ENCODE measurements at regions of chr9 and their contacts with region 1.

Region 1: DNA sequence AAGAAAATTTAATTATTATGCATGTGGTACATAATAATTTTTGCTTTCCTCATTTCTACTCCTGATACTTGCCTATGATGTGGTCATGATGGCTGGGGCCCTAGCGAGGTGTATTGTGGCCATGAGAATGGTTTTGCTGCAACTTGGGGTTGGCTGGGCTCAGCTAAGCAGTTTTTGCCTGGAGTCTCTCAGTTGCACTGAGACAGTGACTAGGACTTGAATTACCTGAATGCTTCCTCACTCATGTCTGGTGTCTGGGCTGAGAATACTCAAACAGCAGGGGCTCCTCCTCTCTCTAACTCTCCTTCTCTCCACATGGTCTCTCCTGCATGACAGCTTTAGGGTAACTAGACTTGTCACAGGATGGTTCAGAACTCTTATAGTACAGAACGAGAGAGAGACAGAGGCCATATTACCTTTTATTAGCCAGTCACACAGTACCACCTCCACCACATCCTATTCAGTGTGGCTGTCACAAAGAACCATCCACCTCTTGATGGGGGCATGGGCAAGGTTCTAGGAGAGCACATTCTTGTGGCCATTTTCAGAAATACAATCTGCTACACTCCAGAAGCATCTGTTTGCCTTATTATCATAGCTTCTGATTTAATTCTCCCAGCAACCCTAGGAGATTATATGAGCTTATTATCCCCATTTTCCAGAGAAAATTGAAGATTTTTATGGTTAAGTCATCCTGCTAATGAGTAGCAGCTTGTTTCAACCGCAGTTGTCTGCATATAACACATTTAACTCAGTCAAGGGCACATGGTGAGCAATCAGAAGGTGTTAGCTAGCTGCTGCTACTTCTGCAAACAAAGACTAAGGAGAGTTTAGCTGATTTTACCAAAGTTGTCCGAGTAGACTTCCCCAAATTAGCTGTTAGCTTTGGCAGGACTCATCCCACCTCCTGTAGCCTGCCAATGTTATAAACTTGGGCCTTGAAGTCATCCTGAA is 245.1 kb downstream of the DOCK8 start:
- DNase-seq: no peak
- H3K4me3 ChIP-seq: no peak overlapping the region
- H3K27ac ChIP-seq: no peak overlapping the region
- H3K4me1 ChIP-seq: no peaks in the 10 kb centered on the region
- H3K27me3 ChIP-seq: no peaks in the 10 kb centered on the region
- CTCF ChIP-seq: no peak
- POLR2A ChIP-seq: no peak

Region 2: DNA sequence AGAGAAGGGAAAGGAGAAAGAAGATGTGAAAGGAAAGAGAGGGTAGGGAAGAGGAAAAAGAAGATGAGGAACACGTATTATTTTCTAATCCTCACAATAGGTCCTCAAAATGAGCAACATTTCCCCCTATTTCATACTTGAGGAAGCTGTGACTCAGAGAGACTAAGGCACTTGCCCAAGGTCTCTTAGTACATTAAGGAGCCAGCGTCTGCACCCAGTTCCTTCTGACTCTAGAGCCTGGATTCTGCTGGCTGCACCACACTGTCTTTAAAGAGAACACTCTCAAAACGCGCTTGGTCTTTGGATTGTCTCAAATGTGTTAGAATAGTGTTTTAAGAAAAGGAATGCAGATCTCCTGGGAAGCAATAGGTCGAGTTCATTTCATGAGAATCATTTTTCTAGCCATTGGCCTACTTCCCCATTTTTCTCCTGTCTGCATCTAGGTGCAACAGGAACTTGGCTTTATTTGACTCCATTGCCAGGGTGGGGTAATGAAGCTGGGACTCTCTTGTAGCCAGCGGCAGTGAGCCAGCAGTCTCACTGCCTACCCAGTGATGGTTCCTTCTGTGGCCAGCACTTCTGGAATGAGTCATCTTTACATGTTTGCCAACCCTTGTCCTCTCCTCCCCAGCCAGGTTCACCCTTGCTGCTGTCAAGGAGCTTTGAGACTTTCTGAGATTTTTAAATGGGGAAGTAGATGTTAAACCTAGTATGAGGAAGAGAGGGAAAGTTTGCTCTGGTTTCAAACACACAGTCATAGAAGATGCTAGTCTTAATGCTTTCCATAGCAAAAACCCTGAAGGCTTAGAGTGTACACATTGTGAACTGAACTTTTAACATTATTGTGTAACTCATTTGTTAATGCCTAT is 162.4 kb before region 1 on chr9:
- intact Hi-C with region 1: no loop called
- DNase-seq: peak; percentile 26
- H3K4me3 ChIP-seq: no peak overlapping the region
- H3K27ac ChIP-seq: peak overlapping the region in 1 of 2 donors; percentile 73
- H3K4me1 ChIP-seq: no peaks in the 10 kb centered on the region
- H3K27me3 ChIP-seq: no peaks in the 10 kb centered on the region
- CTCF ChIP-seq: no peak
- POLR2A ChIP-seq: no peak

Region 3: DNA sequence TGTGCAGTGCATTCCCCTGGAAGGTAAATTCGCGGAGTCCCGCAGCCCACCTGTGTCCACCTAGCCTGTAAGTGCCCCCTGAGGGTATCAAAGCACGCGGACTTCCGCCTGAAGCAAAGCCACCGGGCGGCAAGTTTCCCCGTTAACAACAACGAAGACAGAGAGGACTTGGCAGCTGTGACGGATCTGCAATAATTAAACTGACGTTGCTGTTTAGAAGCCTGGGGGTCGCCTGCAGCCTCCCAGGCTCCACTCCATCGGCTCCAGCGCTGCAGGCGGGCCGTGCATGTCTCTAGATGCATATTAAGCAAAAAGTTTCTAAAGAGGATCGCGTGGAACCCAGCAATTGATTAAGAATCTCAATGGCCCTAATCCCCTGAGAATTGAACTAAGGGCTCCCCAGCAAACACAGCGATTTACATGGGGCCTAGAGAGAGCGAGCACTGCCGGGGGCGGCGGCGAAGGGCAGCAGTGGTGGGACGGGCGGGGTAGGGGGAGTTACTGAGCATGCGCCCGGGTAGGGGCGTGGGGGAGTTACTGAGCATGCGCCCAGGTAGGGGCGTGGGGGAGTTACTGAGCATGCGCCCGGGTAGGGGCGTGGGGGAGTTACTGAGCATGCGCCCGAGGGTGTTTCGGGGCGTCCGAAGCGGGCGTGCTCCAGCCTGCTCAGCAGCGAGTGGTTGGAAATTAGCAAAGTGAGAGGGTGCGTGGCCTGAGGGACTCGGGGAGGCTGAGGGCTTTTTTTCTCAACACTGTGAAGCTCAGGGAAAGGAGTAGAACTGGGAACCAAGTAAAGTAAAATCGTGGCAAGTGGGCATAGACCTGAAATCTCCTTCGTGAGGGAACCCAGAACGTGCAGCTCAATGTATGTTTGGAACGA is 10.1 kb after region 1 on chr9:
- intact Hi-C with region 1: no loop called
- DNase-seq: peak; percentile 84
- H3K4me3 ChIP-seq: peak overlapping the region; percentile 30 to 47
- H3K27ac ChIP-seq: peak overlapping the region; percentile 75 to 82
- H3K4me1 ChIP-seq: peaks cover 4% of the 10 kb centered on the region
- H3K27me3 ChIP-seq: no peaks in the 10 kb centered on the region
- CTCF ChIP-seq: no peak
- POLR2A ChIP-seq: peak; percentile 54

Region 4: DNA sequence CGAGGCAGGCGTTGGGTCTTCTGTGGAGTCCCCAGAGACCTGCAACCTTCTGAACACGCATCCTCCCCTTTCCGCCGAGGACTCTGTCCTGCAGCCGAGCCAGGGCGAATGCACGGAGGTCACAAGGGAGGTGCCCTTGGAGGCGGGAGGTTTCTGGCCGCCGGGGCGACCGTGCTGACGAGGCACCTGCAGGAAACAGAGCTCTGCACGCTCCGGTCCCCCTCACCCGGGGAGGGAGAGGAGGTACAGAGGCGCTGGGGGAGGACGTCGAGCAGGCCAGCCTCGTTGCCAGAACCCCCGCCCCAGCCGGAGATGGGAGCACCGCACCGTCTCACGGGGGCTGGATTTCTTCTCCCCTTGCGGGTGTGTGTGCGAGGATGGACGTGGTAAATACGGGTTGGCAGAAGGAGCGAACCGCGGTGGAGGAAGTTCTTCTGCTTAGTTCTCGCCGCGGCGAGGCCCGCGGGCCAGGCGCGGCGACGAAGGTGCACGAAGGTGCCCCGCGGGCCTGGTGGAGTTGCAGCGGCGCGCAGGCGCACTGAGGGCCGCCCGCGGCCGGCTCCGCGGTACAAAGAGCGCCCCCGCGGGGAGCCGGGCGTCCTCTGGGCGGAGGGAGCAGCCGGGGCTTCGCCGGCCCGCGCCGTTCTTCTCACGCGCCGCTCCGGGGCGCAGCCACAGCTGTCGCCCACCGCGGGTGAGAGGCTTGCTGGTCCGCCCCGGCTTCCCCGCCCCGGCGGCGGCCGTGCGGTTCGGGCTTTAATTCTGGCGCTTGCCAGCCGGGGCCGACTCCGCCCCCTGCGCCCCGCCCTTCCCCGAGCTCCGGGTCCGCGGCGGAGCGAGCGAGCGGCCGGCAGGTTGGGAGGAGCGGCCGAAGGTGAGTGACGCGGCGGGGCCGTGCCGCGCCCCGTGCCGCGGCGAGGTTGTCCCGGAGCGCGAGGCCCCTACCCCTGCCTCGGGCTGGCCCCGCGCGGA is 44.4 kb after region 1 on chr9:
- intact Hi-C with region 1: loop called (anchors 10 kb)
- DNase-seq: peak; percentile 76
- H3K4me3 ChIP-seq: peak within 1 kb of the TSS; percentile 67 to 75
- H3K27ac ChIP-seq: peak within 1 kb of the TSS; percentile 88 to 92
- H3K4me1 ChIP-seq: peaks cover 2% of the 10 kb centered on the region
- H3K27me3 ChIP-seq: no peaks in the 10 kb centered on the region
- CTCF ChIP-seq: peak; percentile 30 to 64 (median 54)
- POLR2A ChIP-seq: peak; percentile 68